ENCODE measurements at regions of chr11 and their contacts with region 1.

Region 1: DNA sequence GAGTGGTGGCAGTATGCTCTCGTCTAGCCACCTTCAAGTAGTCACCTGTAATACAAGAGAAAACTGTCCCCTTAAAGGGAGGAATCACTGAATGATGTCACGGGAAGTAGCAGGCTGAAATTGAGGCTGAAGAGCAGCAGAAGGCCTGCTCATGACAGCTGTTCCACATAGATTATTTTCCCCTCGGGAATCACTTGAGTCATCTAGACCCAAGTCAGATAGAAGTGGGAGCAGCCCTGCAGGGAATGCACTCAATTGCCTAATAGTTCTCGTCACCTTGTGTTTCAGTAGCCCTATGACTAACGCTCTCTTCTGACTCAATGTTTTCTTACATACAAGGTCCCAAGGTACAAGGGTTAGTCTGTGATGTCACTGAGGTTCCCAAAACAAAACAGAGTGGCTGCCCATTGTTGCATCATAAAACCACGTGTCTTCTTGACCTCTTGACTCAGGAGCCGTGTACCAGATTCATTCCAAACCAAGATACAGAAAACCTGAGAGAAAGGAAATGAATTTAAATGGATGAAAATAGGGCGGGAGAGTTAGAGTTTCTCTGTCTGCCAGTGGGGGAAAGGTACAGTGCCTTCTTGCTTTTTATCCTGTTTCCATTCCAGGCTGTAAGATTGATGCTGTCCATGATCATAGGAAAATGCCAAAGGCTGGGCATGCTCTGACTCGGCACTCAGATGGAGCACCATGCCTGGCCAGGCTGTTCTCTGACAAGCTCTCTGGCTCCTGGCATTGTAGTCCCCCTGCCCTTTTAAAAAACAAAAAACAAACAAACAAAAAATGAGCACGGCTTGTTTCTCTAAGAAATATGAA is 21.6 kb upstream of the C11orf96 start:
- DNase-seq: peak; percentile 99
- H3K4me3 ChIP-seq: no peak overlapping the region
- H3K27ac ChIP-seq: peak overlapping the region; percentile 95
- H3K27me3 ChIP-seq: no peaks in the 10 kb centered on the region
- CTCF ChIP-seq: no peak

Region 2: GRCh38 chr11:43632171-43632570 is 288.6 kb before region 1 on chr11:
- CTCF ChIA-PET with region 1: no interaction called
- POLR2A ChIA-PET with region 1: no interaction called
- DNase-seq: no peak
- H3K4me3 ChIP-seq: no peak overlapping the region
- H3K27ac ChIP-seq: no peak overlapping the region
- H3K27me3 ChIP-seq: peaks cover 4% of the 10 kb centered on the region
- CTCF ChIP-seq: no peak

Region 3: DNA sequence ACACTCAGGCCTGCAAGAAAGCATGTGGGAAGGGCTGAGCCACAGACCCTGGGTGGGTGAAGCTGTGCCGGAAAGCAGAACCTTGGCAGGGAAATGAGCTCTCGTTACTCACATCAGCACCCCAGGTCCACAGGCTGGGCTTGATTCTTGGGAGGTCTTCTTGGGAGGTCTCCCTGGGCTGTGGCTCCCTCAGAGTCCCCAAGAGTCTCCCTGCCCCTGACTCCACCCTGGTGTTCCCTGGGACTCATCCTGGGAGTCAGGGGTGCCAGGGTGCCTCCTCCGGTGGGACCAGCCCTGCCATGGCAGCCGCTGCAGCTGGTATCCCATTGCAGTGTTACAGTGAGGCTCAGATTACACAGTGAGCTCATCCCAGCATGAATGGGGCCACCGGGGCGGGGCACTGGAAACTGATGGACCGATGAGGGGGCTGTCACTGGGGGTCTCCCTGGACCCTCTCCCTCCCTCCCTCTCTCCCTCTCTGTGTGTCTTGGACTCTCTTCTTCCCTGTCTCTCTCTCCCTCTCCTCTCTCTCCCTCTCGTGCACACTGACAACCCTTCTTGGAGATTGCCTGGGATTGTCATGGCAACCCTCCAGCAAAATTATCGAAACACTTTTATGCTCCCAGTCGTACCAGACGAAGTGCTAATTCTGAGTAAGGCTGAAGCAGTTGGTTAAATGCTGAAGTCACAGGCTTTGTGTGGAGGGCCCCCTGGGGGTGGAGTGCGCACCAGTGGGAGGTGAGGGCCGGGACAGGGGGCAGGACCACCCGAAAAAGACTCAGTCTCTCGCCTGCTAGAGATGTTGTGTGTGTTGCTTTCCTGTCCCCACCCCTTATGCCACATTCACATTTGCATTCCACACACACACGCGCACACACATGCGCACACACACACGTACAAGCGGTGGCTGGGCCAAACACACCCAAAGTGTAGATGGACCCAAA is 13.1 kb after region 1 on chr11:
- CTCF ChIA-PET with region 1: interaction called, 4 read pairs
- POLR2A ChIA-PET with region 1: interaction called, 13 read pairs
- DNase-seq: no peak
- H3K4me3 ChIP-seq: peak overlapping the region; percentile 33
- H3K27ac ChIP-seq: peak overlapping the region; percentile 39
- H3K27me3 ChIP-seq: no peaks in the 10 kb centered on the region
- CTCF ChIP-seq: no peak

Measured in AG04450 (cell line).